Breast epithelium (tissue), 4 donors: ENCODE measurements at regions of chr7 and their contacts with region 1.

Region 1: DNA sequence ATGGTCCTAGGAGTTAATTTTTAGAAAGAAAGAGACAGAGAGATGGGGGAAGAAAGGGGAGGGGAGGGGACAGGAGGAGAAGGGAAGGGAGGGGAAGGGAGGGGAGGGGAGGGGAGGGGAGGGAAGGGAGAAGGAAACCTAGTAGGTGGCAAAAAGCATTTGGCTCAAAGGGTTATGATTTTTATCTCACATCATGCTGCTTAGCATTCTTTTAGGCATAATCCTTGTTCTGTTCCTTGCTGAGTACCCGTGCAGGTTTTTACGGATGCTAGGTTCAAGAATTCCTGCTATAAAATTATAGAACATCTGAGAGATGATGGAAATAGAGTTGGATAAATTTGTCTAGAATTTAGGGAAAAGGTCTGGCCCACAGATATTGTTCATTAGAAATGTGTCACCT is 132.4 kb upstream of the PRSS1 start:
- DNase-seq: no peak
- H3K4me3 ChIP-seq: no peak overlapping the region
- H3K27ac ChIP-seq: no peak overlapping the region
- H3K4me1 ChIP-seq: no peaks in the 10 kb centered on the region
- H3K27me3 ChIP-seq: no peaks in the 10 kb centered on the region
- CTCF ChIP-seq: no peak
- POLR2A ChIP-seq: no peak

Region 2: DNA sequence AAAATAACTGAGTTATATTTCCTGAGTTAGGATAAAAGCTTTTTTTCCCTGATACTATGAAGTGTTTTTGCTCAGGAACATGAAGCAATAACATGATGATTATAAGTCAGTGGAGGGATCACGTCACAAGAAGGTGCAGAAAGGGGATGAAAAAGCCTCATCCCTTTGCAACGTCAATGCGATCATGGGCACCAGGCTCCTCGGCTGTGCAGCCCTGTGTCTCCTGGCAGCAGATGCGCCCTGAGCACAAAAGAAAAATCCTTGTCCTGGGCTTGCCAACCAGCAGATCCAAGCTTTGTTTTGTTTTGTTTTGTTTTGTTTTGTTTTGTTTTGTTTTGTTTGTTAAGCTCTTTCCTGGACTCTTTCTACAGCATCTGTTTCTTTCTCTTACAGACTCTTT is 28.9 kb after region 1 on chr7:
- intact Hi-C with region 1: loop called (anchors 1 kb)
- DNase-seq: no peak
- H3K4me3 ChIP-seq: no peak overlapping the region
- H3K27ac ChIP-seq: no peak overlapping the region
- H3K4me1 ChIP-seq: no peaks in the 10 kb centered on the region
- H3K27me3 ChIP-seq: peaks cover 0 to 6% of the 10 kb centered on the region in 2 donors
- CTCF ChIP-seq: no peak
- POLR2A ChIP-seq: no peak